ENCODE measurements at regions of chr21 and their contacts with region 1.

Region 1: GRCh38 chr21:31088315-31088714 is 50.0 kb upstream of the KRTAP19-8 start:
- DNase-seq: no peak
- ATAC-seq: no peak
- H3K4me3 Mint-ChIP-seq: no peak overlapping the region
- H3K27ac Mint-ChIP-seq: no peak overlapping the region
- H3K4me1 Mint-ChIP-seq: peaks cover 11% of the 10 kb centered on the region
- H3K27me3 Mint-ChIP-seq: peaks cover 10% of the 10 kb centered on the region

Region 2: GRCh38 chr21:30044445-30045064 is 1043.8 kb before region 1 on chr21:
- CTCF ChIA-PET with region 1: interaction called, 10 read pairs
- POLR2A ChIA-PET with region 1: no interaction called
- DNase-seq: peak; percentile 21
- ATAC-seq: no peak
- H3K4me3 Mint-ChIP-seq: no peak overlapping the region
- H3K27ac Mint-ChIP-seq: no peak overlapping the region
- H3K4me1 Mint-ChIP-seq: no peaks in the 10 kb centered on the region
- H3K27me3 Mint-ChIP-seq: no peaks in the 10 kb centered on the region

Region 3: GRCh38 chr21:30831194-30831765 is 257.0 kb before region 1 on chr21:
- CTCF ChIA-PET with region 1: interaction called, 29 read pairs
- POLR2A ChIA-PET with region 1: interaction called, 3 read pairs
- DNase-seq: peak; percentile 51
- ATAC-seq: no peak
- H3K4me3 Mint-ChIP-seq: no peak overlapping the region
- H3K27ac Mint-ChIP-seq: no peak overlapping the region
- H3K4me1 Mint-ChIP-seq: no peaks in the 10 kb centered on the region
- H3K27me3 Mint-ChIP-seq: peaks cover 3% of the 10 kb centered on the region

Measured in activated CD8-positive, alpha-beta T cell treated with anti-CD3 and anti-CD28 coated beads, Interleukin-2, amount 10 ng/mL, durations not matched to agents 7 days and 5 days (primary cell).